CD4-positive, alpha-beta memory T cell (primary cell): ENCODE measurements at regions of chr11 and their contacts with region 1.

Region 1: GRCh38 chr11:117143871-117144476 is at the start of gene PAFAH1B2:
- DNase-seq: peak; percentile 94 to 95 (median 94)
- H3K4me3 ChIP-seq: peak within 1 kb of the TSS; percentile 68 to 93
- H3K4me3 Mint-ChIP-seq: peak within 1 kb of the TSS; percentile 97 to 100 (median 99)
- H3K27ac ChIP-seq: peak within 1 kb of the TSS; percentile 70
- H3K27ac Mint-ChIP-seq: peak within 1 kb of the TSS; percentile 92 to 99 (median 98)
- H3K4me1 ChIP-seq: peaks cover 46% of the 10 kb centered on the region
- H3K4me1 Mint-ChIP-seq: peaks cover 33 to 56% (median 44%) of the 10 kb centered on the region in 4 donors
- H3K27me3 ChIP-seq: no peaks in the 10 kb centered on the region
- H3K27me3 Mint-ChIP-seq: peaks cover 2 to 6% of the 10 kb centered on the region in 2 donors
- total RNA-seq, gene PAFAH1B2: 61.6 to 64.2 TPM

Region 2: GRCh38 chr11:116772443-116773202 is 371.4 kb before region 1 on chr11 and contains the start of gene BUD13:
- CTCF ChIA-PET with region 1: no interaction called
- POLR2A ChIA-PET with region 1: interaction called, 15 read pairs
- intact Hi-C with region 1: no loop called
- DNase-seq: peak; percentile 92 to 96 (median 93)
- H3K4me3 ChIP-seq: peak within 1 kb of the TSS; percentile 71 to 93
- H3K4me3 Mint-ChIP-seq: peak within 1 kb of the TSS; percentile 97 to 100 (median 98)
- H3K27ac ChIP-seq: peak within 1 kb of the TSS; percentile 94
- H3K27ac Mint-ChIP-seq: peak within 1 kb of the TSS; percentile 94 to 99 (median 98)
- H3K4me1 ChIP-seq: peaks cover 24% of the 10 kb centered on the region
- H3K4me1 Mint-ChIP-seq: peaks cover 24 to 47% (median 35%) of the 10 kb centered on the region in 4 donors
- H3K27me3 ChIP-seq: no peaks in the 10 kb centered on the region
- H3K27me3 Mint-ChIP-seq: no peaks in the 10 kb centered on the region
- total RNA-seq, gene BUD13: 19.9 to 23.1 TPM

Region 3: GRCh38 chr11:116865696-116866095 is 278.3 kb before region 1 on chr11:
- CTCF ChIA-PET with region 1: no interaction called
- POLR2A ChIA-PET with region 1: no interaction called
- intact Hi-C with region 1: no loop called
- DNase-seq: no peak
- H3K4me3 ChIP-seq: no peak overlapping the region
- H3K4me3 Mint-ChIP-seq: no peak overlapping the region
- H3K27ac ChIP-seq: no peak overlapping the region
- H3K27ac Mint-ChIP-seq: peak overlapping the region in 3 of 7 donors; percentile 54 to 63 (median 58)
- H3K4me1 ChIP-seq: no peaks in the 10 kb centered on the region
- H3K4me1 Mint-ChIP-seq: peaks cover 2 to 7% (median 4%) of the 10 kb centered on the region in 4 donors
- H3K27me3 ChIP-seq: no peaks in the 10 kb centered on the region
- H3K27me3 Mint-ChIP-seq: no peaks in the 10 kb centered on the region

Region 4: DNA sequence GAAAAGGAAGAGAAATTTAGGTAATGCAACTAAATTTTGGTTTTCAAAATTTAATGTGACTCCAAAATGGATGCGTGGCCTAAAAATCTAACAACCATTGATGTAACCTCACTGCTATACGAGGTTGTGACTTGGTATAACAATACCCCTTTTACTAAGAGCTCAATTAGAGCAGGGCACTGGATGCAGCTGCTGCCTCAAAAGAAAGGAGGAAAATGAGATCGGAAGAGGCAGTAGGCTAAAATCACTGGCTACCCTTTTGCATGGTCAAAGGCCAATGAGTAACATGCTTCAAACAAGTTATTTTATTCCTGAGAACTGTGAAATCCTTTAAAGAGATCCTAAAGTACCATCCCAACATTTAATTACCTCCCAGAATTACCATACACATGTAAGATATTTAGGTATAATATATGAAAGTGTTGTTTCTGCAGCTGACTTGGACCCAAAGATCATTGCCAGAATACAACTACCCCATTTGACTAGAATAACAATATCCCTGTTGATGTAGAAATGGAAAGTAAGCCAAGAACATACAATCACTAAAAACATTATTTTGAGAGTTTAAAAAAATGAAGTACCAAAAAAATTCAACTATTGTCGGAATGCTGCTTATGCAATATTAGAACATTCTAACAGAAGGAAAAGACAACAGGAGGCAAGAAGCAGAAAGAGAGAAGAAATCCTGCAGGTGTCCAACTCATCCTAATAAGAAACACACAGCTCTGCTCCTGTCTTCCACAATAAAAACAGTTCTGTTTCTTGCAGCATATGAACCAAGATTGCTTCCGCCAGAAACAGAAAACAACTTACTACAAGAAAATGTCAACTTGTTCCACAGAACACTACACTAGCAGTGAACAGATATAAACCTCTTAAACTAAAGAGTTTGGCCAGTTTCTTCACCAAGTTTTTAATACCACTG is 60.7 kb before region 1 on chr11:
- CTCF ChIA-PET with region 1: no interaction called
- POLR2A ChIA-PET with region 1: no interaction called
- intact Hi-C with region 1: no loop called
- DNase-seq: no peak
- H3K4me3 ChIP-seq: no peak overlapping the region
- H3K4me3 Mint-ChIP-seq: peak overlapping the region in 5 of 8 donors; percentile 9 to 63 (median 45)
- H3K27ac ChIP-seq: no peak overlapping the region
- H3K27ac Mint-ChIP-seq: peak overlapping the region in 2 of 7 donors; percentile 2 to 82
- H3K4me1 ChIP-seq: peaks cover 46% of the 10 kb centered on the region
- H3K4me1 Mint-ChIP-seq: peaks cover 46 to 80% (median 61%) of the 10 kb centered on the region in 4 donors
- H3K27me3 ChIP-seq: no peaks in the 10 kb centered on the region
- H3K27me3 Mint-ChIP-seq: no peaks in the 10 kb centered on the region

Region 5: GRCh38 chr11:117171404-117172061 is 27.6 kb after region 1 on chr11:
- CTCF ChIA-PET with region 1: interaction called, 3 read pairs
- POLR2A ChIA-PET with region 1: interaction called, 11 read pairs
- intact Hi-C with region 1: no loop called
- DNase-seq: no peak
- H3K4me3 ChIP-seq: no peak overlapping the region
- H3K4me3 Mint-ChIP-seq: no peak overlapping the region
- H3K27ac ChIP-seq: no peak overlapping the region
- H3K27ac Mint-ChIP-seq: peak overlapping the region in 5 of 7 donors; percentile 13 to 77 (median 48)
- H3K4me1 ChIP-seq: peaks cover 3% of the 10 kb centered on the region
- H3K4me1 Mint-ChIP-seq: peaks cover 0 to 9% (median 3%) of the 10 kb centered on the region in 4 donors
- H3K27me3 ChIP-seq: no peaks in the 10 kb centered on the region
- H3K27me3 Mint-ChIP-seq: no peaks in the 10 kb centered on the region

Region 6: DNA sequence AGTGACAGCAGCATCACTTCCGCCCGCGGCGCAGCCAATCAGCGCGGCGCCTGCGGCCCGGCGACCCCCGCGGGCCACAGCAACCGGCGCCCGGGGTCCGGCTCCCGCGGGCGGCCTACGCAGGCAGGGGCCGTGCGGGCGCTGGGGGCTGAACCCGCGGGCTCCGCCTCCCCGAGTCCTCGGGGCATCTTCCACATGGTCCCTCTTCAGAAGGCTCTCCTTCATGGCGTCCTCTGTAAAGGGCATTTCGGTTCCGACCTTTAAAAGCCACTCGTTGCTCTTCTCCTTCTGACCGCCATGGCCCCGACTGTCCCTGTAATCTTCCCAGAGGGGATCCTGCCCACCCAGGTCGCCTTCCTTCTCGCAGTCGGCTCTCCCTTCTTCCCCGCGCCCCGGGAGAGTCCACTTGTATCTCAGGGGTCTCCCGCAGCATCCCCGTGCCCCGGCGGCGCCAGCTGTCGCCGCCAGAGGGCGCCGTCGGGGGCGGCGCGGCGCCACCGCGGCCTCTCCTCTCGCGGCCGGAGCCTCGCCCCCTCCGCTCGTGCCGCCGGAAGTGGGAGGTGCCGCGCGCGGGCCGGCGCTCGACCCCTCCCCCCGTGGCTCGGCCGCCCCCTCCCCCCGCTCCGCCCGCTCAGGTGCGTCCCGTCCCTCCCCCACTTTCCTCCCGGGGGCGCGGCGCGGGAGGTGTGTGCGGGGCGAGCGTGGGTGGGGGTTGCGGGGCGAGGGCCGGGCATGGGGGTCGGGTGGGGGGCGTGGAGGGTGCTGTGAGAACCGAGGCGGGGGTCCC is 88.3 kb after region 1 on chr11 and contains the start of gene RNF214:
- CTCF ChIA-PET with region 1: interaction called, 17 read pairs
- POLR2A ChIA-PET with region 1: interaction called, 27 read pairs
- intact Hi-C with region 1: loop called (anchors 1 kb)
- DNase-seq: peak; percentile 65 to 83 (median 75)
- H3K4me3 ChIP-seq: peak within 1 kb of the TSS; percentile 87 to 93
- H3K4me3 Mint-ChIP-seq: peak within 1 kb of the TSS; percentile 97 to 100 (median 99)
- H3K27ac ChIP-seq: peak within 1 kb of the TSS; percentile 90
- H3K27ac Mint-ChIP-seq: peak within 1 kb of the TSS; percentile 95 to 100 (median 99)
- H3K4me1 ChIP-seq: peaks cover 47% of the 10 kb centered on the region
- H3K4me1 Mint-ChIP-seq: peaks cover 27 to 62% (median 49%) of the 10 kb centered on the region in 4 donors
- H3K27me3 ChIP-seq: no peaks in the 10 kb centered on the region
- H3K27me3 Mint-ChIP-seq: no peaks in the 10 kb centered on the region
- total RNA-seq, gene RNF214: 41.8 to 50.1 TPM

Region 7: GRCh38 chr11:117327567-117328374 is 183.8 kb after region 1 on chr11 and contains the start of gene CEP164:
- CTCF ChIA-PET with region 1: no interaction called
- POLR2A ChIA-PET with region 1: interaction called, 10 read pairs
- intact Hi-C with region 1: no loop called
- DNase-seq: peak; percentile 93 to 97 (median 95)
- H3K4me3 ChIP-seq: peak within 1 kb of the TSS; percentile 76 to 93
- H3K4me3 Mint-ChIP-seq: peak within 1 kb of the TSS in 6 of 8 donors; percentile 6 to 60 (median 42)
- H3K27ac ChIP-seq: peak within 1 kb of the TSS; percentile 85
- H3K27ac Mint-ChIP-seq: peak within 1 kb of the TSS in 3 of 7 donors; percentile 10 to 59 (median 53)
- H3K4me1 ChIP-seq: peaks cover 19% of the 10 kb centered on the region
- H3K4me1 Mint-ChIP-seq: peaks cover 0 to 11% (median 9%) of the 10 kb centered on the region in 4 donors
- H3K27me3 ChIP-seq: no peaks in the 10 kb centered on the region
- H3K27me3 Mint-ChIP-seq: no peaks in the 10 kb centered on the region
- total RNA-seq, gene CEP164: 40.8 to 42.5 TPM